PC-9 (cell line): ENCODE measurements at regions of chr12 and their contacts with region 1.

Region 1: GRCh38 chr12:51246254-51246853 is 7.7 kb downstream of the DAZAP2 start:
- DNase-seq: no peak
- H3K4me3 ChIP-seq: no peak overlapping the region
- H3K27ac ChIP-seq: no peak overlapping the region
- H3K4me1 ChIP-seq: peaks cover under 1% of the 10 kb centered on the region; the same call in 1 of the 2 replicates
- H3K27me3 ChIP-seq: no peaks in the 10 kb centered on the region
- CTCF ChIP-seq: no peak

Region 2: GRCh38 chr12:51000245-51000644 is 246.1 kb before region 1 on chr12:
- CTCF ChIA-PET with region 1: no interaction called
- POLR2A ChIA-PET with region 1: no interaction called
- intact Hi-C with region 1: no loop called
- DNase-seq: peak in 1 of 2 experiments; percentile 35
- H3K4me3 ChIP-seq: no peak overlapping the region
- H3K27ac ChIP-seq: no peak overlapping the region
- H3K4me1 ChIP-seq: peaks cover 3% of the 10 kb centered on the region
- H3K27me3 ChIP-seq: no peaks in the 10 kb centered on the region
- CTCF ChIP-seq: no peak

Region 3: GRCh38 chr12:51217968-51218606 is 28.3 kb before region 1 on chr12 and contains the start of gene POU6F1:
- CTCF ChIA-PET with region 1: interaction called, 5 read pairs
- POLR2A ChIA-PET with region 1: interaction called, 10 read pairs
- intact Hi-C with region 1: no loop called
- DNase-seq: peak; percentile 62 to 63
- H3K4me3 ChIP-seq: peak within 1 kb of the TSS; percentile 70
- H3K27ac ChIP-seq: no peak within 1 kb of the TSS
- H3K4me1 ChIP-seq: peaks cover 9% of the 10 kb centered on the region
- H3K27me3 ChIP-seq: no peaks in the 10 kb centered on the region
- CTCF ChIP-seq: peak; percentile 69
- total RNA-seq, gene POU6F1: 5.3 and 7.0 TPM in 2 replicates

Region 4: DNA sequence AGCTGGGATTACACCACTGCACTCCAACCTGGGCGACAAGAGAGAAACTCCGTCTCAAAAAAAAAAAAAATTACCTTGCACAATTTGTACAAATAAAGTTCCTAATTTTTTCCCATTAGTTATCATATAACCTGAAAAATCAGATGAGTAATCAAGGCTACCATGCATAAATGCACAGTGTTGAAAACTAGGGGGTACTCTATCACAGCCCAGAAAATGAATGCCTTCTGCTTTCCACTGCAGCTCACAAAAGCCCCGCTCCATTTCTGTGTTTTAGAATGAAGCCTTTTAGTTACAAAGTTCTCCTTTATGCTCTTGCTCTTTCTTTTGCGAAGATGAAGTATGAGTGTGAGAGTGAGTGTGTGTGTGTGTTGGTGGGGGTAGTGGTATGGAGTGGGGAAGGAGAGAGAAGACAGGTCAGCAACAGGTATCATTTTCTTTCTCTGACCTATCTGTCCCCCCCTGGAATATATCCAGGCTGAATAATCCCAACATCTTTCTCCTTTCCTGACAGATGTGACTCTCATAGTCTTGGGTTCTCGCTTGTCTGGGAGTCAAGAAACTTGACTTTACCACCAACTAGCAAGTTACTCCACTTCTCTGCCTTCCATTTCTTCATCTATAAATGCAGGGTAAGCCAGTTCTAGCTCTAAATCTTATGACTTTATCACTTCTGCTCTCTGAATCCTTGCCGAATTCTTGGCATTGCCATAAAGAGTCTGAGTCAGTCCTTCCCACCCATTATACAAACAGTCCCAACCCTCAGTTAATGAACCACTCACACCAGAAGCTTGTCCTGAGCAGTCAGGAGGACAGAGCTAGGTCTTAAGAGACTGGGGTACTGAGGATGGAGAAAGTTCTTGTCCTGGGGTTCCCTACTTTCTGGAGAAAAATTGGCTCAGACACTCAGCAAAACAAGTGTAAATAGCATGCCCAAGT is 61.6 kb after region 1 on chr12:
- CTCF ChIA-PET with region 1: no interaction called
- POLR2A ChIA-PET with region 1: interaction called, 15 read pairs
- intact Hi-C with region 1: no loop called
- DNase-seq: peak; percentile 55 to 95
- H3K4me3 ChIP-seq: no peak overlapping the region
- H3K27ac ChIP-seq: peak overlapping the region; percentile 76
- H3K4me1 ChIP-seq: peaks cover 33% of the 10 kb centered on the region
- H3K27me3 ChIP-seq: no peaks in the 10 kb centered on the region
- CTCF ChIP-seq: no peak

Region 5: GRCh38 chr12:52069327-52070184 is 823.2 kb after region 1 on chr12 and contains the start of gene ATG101:
- CTCF ChIA-PET with region 1: no interaction called
- POLR2A ChIA-PET with region 1: no interaction called
- intact Hi-C with region 1: no loop called
- DNase-seq: peak; percentile 87
- H3K4me3 ChIP-seq: peak within 1 kb of the TSS; percentile 89
- H3K27ac ChIP-seq: peak within 1 kb of the TSS; percentile 80
- H3K4me1 ChIP-seq: peaks cover 20% of the 10 kb centered on the region
- H3K27me3 ChIP-seq: peaks cover 6% of the 10 kb centered on the region; the same call in 1 of the 2 replicates
- CTCF ChIP-seq: no peak
- total RNA-seq, gene ATG101: 44.6 and 59.0 TPM in 2 replicates